HCT116 (cell line): ENCODE measurements at regions of chr19 and their contacts with region 1.

Region 1: DNA sequence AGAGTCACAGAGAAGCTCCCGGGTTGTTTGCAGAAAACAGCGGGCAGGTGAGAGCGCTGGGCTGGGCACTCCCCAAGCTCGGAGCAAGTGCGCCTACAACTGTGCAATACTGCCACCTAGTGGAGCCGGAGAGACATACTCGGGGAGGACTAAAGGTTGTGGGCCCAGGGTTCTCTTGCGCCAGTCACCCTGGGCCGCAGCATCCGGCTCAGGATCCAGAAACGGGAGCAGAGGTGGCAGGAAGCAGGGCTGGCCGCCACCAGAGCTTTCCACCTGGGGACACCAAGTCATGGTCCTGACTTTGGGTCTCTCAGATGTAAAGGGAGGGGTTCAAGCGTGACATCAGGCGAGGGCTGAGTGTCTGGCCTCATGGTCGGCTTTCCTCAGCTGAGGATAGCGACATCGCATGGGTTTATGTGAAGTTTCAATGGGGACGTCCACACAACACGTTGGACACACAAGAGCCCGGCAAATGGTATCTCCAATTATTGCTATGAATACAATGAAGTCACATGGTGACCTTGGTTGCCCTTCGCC is 11.2 kb upstream of the KLK4 start:
- DNase-seq: peak; percentile 84
- ATAC-seq: peak; percentile 100
- H3K4me3 ChIP-seq: peak overlapping the region in 1 of 2 experiments; percentile 12; a peak in 1 of 4 replicates
- H3K27ac ChIP-seq: no peak overlapping the region
- H3K4me1 ChIP-seq: peaks cover 9 to 16% of the 10 kb centered on the region in 2 experiments; a peak in 3 of 4 replicates
- H3K27me3 ChIP-seq: no peaks in the 10 kb centered on the region
- CTCF ChIP-seq: peak; percentile 90 to 94 (median 93)
- POLR2A ChIP-seq: no peak
- RAD21 ChIP-seq: peak; percentile 97

Region 2: GRCh38 chr19:50537762-50538230 is 384.6 kb before region 1 on chr19:
- CTCF ChIA-PET with region 1: interaction called, 10 read pairs
- POLR2A ChIA-PET with region 1: no interaction called
- RAD21 ChIA-PET with region 1: no interaction called
- intact Hi-C with region 1: loop called (anchors 1 kb)
- DNase-seq: peak; percentile 79
- ATAC-seq: peak; percentile 97
- H3K4me3 ChIP-seq: no peak overlapping the region
- H3K27ac ChIP-seq: no peak overlapping the region
- H3K4me1 ChIP-seq: no peaks in the 10 kb centered on the region
- H3K27me3 ChIP-seq: no peaks in the 10 kb centered on the region
- CTCF ChIP-seq: peak; percentile 93 to 98 (median 95)
- POLR2A ChIP-seq: no peak
- RAD21 ChIP-seq: peak; percentile 88

Region 3: DNA sequence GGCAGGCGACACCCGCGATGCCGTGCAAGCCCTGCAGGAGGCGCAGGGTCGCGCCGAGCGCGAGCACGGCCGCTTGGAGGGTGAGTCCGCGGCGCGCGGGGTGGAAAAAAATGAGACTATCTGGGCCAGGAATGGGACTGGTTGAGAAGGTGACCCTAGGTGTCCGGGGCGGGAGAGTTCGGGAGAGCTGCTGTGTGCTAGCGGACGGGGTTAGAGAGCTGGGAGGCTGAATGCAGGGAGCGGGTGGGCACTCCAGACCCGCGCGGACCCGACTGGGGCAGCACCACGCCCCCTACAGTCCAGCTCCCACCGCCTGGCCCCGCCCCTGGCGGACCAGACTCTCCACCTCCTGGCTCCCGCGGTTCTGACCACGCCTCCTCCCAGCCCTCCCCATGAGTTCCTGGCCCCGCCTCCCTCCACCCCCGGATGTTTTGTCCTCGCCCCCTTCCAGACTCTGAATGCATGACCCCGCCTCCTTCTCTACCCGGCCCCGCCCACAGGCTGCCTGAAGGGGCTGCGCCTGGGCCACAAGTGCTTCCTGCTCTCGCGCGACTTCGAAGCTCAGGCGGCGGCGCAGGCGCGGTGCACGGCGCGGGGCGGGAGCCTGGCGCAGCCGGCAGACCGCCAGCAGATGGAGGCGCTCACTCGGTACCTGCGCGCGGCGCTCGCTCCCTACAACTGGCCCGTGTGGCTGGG is 197.7 kb before region 1 on chr19:
- CTCF ChIA-PET with region 1: interaction called, 18 read pairs
- POLR2A ChIA-PET with region 1: no interaction called
- RAD21 ChIA-PET with region 1: interaction called, 3 to 16 read pairs
- intact Hi-C with region 1: no loop called
- DNase-seq: peak; percentile 99
- ATAC-seq: peak; percentile 89
- H3K4me3 ChIP-seq: peak overlapping the region; percentile 89 to 93
- H3K27ac ChIP-seq: peak overlapping the region; percentile 75
- H3K4me1 ChIP-seq: peaks cover 18 to 41% of the 10 kb centered on the region in 2 experiments; a peak in 3 of 4 replicates
- H3K27me3 ChIP-seq: no peaks in the 10 kb centered on the region
- CTCF ChIP-seq: peak; percentile 82 to 98 (median 91)
- POLR2A ChIP-seq: peak; percentile 62
- RAD21 ChIP-seq: peak; percentile 51

Region 4: DNA sequence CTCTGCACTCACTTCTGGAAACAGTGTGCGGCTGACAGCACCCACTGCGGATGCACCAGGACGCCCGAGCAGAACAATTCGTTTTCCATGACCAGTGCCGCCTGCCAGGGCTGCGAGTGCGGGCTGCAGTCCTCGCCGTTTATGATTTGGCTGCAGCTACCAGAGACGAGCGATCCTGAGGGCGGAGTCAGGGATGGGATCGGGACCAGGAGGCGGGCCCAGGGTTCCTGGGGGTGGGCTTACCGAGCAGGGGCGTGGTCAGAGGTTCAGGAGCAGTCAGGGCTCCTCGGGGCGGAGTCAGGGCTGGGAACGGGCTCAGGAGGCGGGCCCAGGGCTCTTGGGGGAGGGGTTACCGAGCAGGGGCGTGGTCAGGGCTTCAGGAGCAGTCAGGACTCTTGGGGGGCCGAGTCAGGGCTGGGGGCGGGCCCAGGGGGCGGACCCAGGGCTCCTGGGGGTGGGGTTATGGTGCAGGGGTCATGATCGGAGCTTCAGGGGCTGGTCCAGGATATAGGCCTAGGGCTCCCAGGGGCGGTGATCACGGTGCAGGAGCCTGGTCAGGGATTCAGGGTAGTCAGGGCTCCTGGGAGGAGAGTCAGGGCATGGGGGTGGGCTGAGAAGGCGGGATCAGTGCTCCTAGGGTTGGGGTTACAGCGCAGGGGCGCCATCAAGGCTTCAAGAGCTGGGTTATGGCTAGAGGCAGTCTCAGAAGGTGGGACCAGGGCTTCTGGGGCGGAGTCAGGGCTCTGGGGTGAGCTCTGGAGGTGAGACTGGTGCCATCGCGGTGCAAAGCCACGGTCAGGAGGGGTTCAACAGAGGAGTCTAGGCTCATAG is 12.9 kb before region 1 on chr19:
- CTCF ChIA-PET with region 1: interaction called, 19 read pairs
- POLR2A ChIA-PET with region 1: interaction called, 4 read pairs
- RAD21 ChIA-PET with region 1: interaction called, 4 read pairs
- intact Hi-C with region 1: no loop called
- DNase-seq: peak; percentile 85
- ATAC-seq: peak; percentile 97
- H3K4me3 ChIP-seq: peak overlapping the region; percentile 27 to 55
- H3K27ac ChIP-seq: no peak overlapping the region
- H3K4me1 ChIP-seq: peaks cover 4 to 26% of the 10 kb centered on the region in 2 experiments; a peak in 3 of 4 replicates
- H3K27me3 ChIP-seq: peaks cover 9% of the 10 kb centered on the region
- CTCF ChIP-seq: no peak
- POLR2A ChIP-seq: no peak
- RAD21 ChIP-seq: no peak

Region 5: DNA sequence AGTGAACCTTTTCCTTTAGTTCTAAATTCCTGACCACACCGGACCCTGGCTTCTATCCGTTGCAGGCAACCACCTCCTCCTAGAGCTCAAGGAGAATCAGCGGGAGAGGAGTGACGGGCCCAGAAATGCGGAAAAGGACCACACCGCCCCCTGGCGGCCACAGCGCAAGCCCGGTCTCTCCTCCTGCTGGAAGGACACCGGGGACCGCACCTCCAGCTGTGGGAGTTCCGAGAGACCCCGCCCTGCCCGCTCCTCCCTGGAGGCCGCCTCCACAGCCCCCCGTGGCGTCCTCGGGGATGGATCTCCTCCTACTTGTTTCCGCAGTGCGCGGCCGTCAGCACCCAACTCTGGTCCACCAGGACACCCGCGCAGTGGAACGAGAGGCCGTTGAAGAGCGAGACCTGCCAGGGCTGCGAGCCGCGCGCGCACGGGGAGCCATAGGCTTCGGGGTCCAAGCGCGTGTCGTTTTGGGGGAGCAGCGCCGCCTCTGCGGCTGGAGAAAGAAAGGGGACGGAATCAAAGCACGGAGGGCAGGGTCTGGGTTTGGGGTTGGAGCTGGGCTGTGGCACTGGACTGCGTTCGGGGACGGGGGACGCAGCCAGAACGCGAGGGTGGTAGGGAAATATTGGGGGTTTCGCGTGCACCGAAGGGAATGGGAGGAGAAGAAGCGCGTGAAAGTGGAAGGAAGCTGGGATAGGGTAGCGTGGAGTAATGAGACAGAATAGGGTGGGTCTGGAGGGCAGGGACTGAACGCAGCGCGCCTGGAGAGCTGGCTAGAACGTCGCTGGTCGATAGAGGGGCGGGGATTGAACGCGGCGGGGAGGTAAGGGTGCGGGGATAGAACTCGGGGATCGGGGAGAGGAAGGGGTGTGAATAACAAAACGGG is 94.7 kb after region 1 on chr19:
- CTCF ChIA-PET with region 1: interaction called, 62 read pairs
- POLR2A ChIA-PET with region 1: interaction called, 3 read pairs
- RAD21 ChIA-PET with region 1: interaction called, 3 to 14 read pairs
- intact Hi-C with region 1: no loop called
- DNase-seq: peak; percentile 83
- ATAC-seq: peak; percentile 72
- H3K4me3 ChIP-seq: peak overlapping the region; percentile 60 to 73
- H3K27ac ChIP-seq: peak overlapping the region; percentile 79
- H3K4me1 ChIP-seq: peaks cover 18 to 67% of the 10 kb centered on the region in 2 experiments
- H3K27me3 ChIP-seq: no peaks in the 10 kb centered on the region
- CTCF ChIP-seq: peak; percentile 92 to 96 (median 95)
- POLR2A ChIP-seq: no peak
- RAD21 ChIP-seq: peak; percentile 97